Endothelial cell of umbilical vein (primary cell): ENCODE measurements at regions of chr2 and their contacts with region 1.

Region 1: GRCh38 chr2:184683911-184684310 is 85.6 kb downstream of the ZNF804A start:
- DNase-seq: no peak
- H3K4me3 ChIP-seq: no peak overlapping the region
- H3K27ac ChIP-seq: no peak overlapping the region
- H3K4me1 ChIP-seq: no peaks in the 10 kb centered on the region
- H3K27me3 ChIP-seq: no peaks in the 10 kb centered on the region
- CTCF ChIP-seq: no peak
- POLR2A ChIP-seq: no peak

Region 2: DNA sequence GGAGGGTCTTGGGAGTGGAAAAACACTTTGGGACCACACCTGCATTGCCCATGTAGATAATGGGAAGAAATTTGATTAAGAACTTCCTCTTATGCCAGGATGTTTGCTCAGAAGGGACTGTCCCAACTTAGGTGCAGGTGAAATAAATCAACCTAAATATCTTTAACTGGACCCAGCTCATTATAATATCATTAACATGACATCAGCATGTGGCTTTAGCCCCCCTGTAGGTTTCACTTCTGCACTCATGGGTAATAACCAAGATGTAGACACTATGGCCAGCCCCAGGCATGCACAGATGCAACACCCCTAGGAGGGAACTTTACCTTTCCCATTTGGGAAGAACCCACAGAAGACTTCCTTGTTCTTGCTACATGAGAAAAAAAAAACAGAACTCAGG is 313.0 kb before region 1 on chr2:
- CTCF ChIA-PET with region 1: no interaction called
- POLR2A ChIA-PET with region 1: no interaction called
- dilution Hi-C with region 1: no loop called
- intact Hi-C with region 1: no loop called
- DNase-seq: no peak
- H3K4me3 ChIP-seq: no peak overlapping the region
- H3K27ac ChIP-seq: no peak overlapping the region
- H3K4me1 ChIP-seq: no peaks in the 10 kb centered on the region
- H3K27me3 ChIP-seq: no peaks in the 10 kb centered on the region
- CTCF ChIP-seq: no peak
- POLR2A ChIP-seq: no peak

Region 3: GRCh38 chr2:184654945-184655344 is 29.0 kb before region 1 on chr2:
- CTCF ChIA-PET with region 1: no interaction called
- POLR2A ChIA-PET with region 1: no interaction called
- dilution Hi-C with region 1: no loop called
- intact Hi-C with region 1: no loop called
- DNase-seq: no peak
- H3K4me3 ChIP-seq: no peak overlapping the region
- H3K27ac ChIP-seq: no peak overlapping the region
- H3K4me1 ChIP-seq: no peaks in the 10 kb centered on the region
- H3K27me3 ChIP-seq: no peaks in the 10 kb centered on the region
- CTCF ChIP-seq: no peak
- POLR2A ChIP-seq: no peak

Region 4: GRCh38 chr2:184696644-184697043 is 12.7 kb after region 1 on chr2:
- CTCF ChIA-PET with region 1: no interaction called
- POLR2A ChIA-PET with region 1: no interaction called
- dilution Hi-C with region 1: no loop called
- intact Hi-C with region 1: loop called (anchors 2 kb)
- DNase-seq: no peak
- H3K4me3 ChIP-seq: no peak overlapping the region
- H3K27ac ChIP-seq: no peak overlapping the region
- H3K4me1 ChIP-seq: no peaks in the 10 kb centered on the region
- H3K27me3 ChIP-seq: no peaks in the 10 kb centered on the region
- CTCF ChIP-seq: no peak
- POLR2A ChIP-seq: no peak

Region 5: GRCh38 chr2:184824597-184824996 is 140.7 kb after region 1 on chr2:
- CTCF ChIA-PET with region 1: no interaction called
- POLR2A ChIA-PET with region 1: no interaction called
- dilution Hi-C with region 1: no loop called
- intact Hi-C with region 1: no loop called
- DNase-seq: no peak
- H3K4me3 ChIP-seq: no peak overlapping the region
- H3K27ac ChIP-seq: no peak overlapping the region
- H3K4me1 ChIP-seq: no peaks in the 10 kb centered on the region
- H3K27me3 ChIP-seq: no peaks in the 10 kb centered on the region
- CTCF ChIP-seq: no peak
- POLR2A ChIP-seq: no peak